Activated CD4-positive, alpha-beta memory T cell treated with anti-CD3 and anti-CD28 coated beads, Interleukin-2, amount 10 ng/mL, durations not matched to agents 7 days and 5 days (primary cell): ENCODE measurements at regions of chr9 and their contacts with region 1.

Region 1: DNA sequence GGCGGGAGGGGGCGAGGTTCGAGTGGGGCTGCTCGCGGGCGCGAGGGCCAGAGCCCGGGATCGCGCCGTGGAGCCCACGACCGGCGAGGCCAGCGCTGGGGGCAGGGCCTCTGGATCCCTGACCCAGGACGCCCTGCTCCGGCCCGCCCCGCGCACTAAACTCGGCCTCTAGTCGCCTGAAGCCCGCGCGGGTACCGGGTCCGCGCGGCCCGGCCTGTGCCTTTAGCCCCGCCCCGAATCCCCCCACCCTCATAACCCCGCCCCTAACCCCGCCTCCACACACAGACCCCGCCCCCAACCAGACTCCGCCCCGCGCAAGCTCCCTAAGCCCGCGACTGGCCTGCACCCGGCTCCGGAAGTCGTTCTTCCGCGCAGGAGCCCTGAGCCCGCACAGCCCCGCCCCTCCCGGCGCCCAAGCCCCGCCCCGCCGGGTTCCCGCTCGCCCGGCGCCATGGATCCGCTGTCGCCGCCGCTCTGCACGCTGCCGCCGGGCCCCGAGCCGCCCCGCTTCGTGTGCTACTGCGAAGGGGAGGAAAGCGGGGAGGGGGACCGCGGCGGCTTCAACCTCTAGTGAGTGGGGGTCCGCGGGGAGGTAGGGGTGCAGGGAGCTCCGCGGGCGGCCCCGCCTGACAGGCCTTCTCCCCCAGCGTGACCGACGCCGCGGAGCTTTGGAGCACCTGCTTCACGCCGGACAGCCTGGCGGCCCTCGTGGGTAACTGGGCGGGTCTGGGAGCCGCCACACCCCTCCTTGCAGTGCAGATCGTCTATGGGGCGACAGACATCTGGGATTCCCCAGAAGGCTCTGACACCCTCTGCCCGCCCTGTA is at the start of gene PAXX:
- DNase-seq: peak; percentile 95
- H3K4me3 Mint-ChIP-seq: peak within 1 kb of the TSS; percentile 78
- H3K27ac Mint-ChIP-seq: peak within 1 kb of the TSS; percentile 81
- H3K4me1 Mint-ChIP-seq: peaks cover 36% of the 10 kb centered on the region
- H3K27me3 Mint-ChIP-seq: peaks cover 27% of the 10 kb centered on the region
- total RNA-seq, gene PAXX: 64.4 to 68.5 TPM

Region 2: DNA sequence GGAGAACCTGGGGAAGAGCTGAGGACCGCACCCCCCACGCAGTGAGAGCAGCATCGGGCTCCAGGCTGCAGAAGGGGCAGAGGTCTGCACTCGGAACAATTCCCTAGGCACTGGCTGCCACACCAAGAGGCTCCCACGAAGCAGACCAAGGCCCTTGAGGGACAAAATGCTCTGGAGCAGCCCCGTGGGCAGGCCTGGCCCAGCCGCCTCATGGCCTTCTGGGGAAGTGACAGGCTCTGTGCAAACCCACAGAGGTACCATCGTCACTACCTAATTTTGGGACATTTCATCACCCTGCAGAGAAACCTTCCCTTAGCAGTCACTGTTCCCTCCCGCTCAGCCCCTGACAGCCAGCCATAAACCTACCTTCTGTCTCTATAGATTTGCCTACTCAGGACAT is 63.6 kb before region 1 on chr9:
- CTCF ChIA-PET with region 1: no interaction called
- POLR2A ChIA-PET with region 1: no interaction called
- DNase-seq: no peak
- H3K4me3 Mint-ChIP-seq: no peak overlapping the region
- H3K27ac Mint-ChIP-seq: no peak overlapping the region
- H3K4me1 Mint-ChIP-seq: peaks cover 14% of the 10 kb centered on the region
- H3K27me3 Mint-ChIP-seq: no peaks in the 10 kb centered on the region

Region 3: GRCh38 chr9:136949817-136950655 is 42.2 kb before region 1 on chr9:
- CTCF ChIA-PET with region 1: interaction called, 8 read pairs
- POLR2A ChIA-PET with region 1: interaction called, 11 read pairs
- DNase-seq: peak; percentile 98
- H3K4me3 Mint-ChIP-seq: peak overlapping the region; percentile 81
- H3K27ac Mint-ChIP-seq: peak overlapping the region; percentile 79
- H3K4me1 Mint-ChIP-seq: peaks cover 12% of the 10 kb centered on the region
- H3K27me3 Mint-ChIP-seq: no peaks in the 10 kb centered on the region

Region 4: DNA sequence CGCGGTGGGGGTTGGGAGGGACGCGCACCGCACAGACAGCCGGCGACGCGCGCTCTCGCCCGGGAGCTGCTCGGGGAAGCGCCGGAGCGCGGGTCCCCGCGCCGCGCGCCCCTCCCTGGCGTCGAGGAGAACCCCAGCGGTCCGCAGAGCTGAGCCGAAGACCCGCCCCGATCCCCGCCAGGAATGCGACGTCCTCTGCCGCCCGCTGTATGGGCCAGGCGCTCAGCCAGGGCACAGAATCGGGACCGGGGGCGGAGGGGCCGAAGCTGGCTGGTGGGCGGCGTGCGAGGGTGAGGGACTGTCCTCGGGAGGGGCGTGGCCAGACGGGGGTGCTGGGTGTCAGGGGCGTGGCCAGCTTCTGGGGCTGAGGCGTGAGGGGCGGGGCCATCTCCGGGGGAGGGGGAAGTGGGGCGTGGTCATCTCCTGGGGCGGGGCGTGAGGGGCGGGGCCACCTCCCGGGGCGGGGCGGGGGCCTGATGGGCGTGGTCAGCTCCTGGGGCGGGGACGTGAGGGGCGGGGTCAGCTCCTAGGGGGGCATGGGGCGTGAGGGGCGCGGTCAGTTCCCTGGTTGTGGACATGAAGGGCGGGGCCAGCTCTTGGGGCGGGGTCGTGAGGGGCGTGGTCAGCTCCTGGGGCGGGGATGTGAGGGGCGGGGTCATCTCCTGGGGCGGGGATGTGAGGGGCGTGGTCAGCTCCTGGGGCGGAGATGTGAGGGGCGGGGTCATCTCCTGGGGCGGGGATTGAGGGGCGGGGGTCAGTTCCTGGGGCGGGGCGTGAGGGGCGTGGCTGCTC is 13.9 kb before region 1 on chr9:
- CTCF ChIA-PET with region 1: interaction called, 13 read pairs
- POLR2A ChIA-PET with region 1: interaction called, 29 read pairs
- DNase-seq: peak; percentile 83
- H3K4me3 Mint-ChIP-seq: no peak overlapping the region
- H3K27ac Mint-ChIP-seq: no peak overlapping the region
- H3K4me1 Mint-ChIP-seq: peaks cover 33% of the 10 kb centered on the region
- H3K27me3 Mint-ChIP-seq: peaks cover 1% of the 10 kb centered on the region

Region 5: GRCh38 chr9:137070201-137070905 is 78.1 kb after region 1 on chr9 and contains the start of gene SAPCD2:
- CTCF ChIA-PET with region 1: interaction called, 11 read pairs
- POLR2A ChIA-PET with region 1: interaction called, 5 read pairs
- DNase-seq: peak; percentile 90
- H3K4me3 Mint-ChIP-seq: peak within 1 kb of the TSS; percentile 73
- H3K27ac Mint-ChIP-seq: peak within 1 kb of the TSS; percentile 63
- H3K4me1 Mint-ChIP-seq: peaks cover 37% of the 10 kb centered on the region
- H3K27me3 Mint-ChIP-seq: no peaks in the 10 kb centered on the region
- total RNA-seq, gene SAPCD2: 26.8 to 27.0 TPM